ENCODE measurements at regions of chr2 and their contacts with region 1.

Region 1: GRCh38 chr2:27032495-27033252 is at the start of gene TMEM214:
- DNase-seq: peak; percentile 65 to 80 (median 73)
- H3K4me3 ChIP-seq: peak within 1 kb of the TSS; percentile 94 to 95
- H3K4me3 Mint-ChIP-seq: peak within 1 kb of the TSS; percentile 94 to 98 (median 96)
- H3K27ac ChIP-seq: peak within 1 kb of the TSS; percentile 77
- H3K27ac Mint-ChIP-seq: peak within 1 kb of the TSS; percentile 81 to 96 (median 95)
- H3K4me1 ChIP-seq: peaks cover 28% of the 10 kb centered on the region
- H3K4me1 Mint-ChIP-seq: peaks cover 19 to 49% (median 36%) of the 10 kb centered on the region in 4 donors
- H3K27me3 ChIP-seq: no peaks in the 10 kb centered on the region
- H3K27me3 Mint-ChIP-seq: no peaks in the 10 kb centered on the region
- total RNA-seq, gene TMEM214: 97.3 to 99.8 TPM

Region 2: DNA sequence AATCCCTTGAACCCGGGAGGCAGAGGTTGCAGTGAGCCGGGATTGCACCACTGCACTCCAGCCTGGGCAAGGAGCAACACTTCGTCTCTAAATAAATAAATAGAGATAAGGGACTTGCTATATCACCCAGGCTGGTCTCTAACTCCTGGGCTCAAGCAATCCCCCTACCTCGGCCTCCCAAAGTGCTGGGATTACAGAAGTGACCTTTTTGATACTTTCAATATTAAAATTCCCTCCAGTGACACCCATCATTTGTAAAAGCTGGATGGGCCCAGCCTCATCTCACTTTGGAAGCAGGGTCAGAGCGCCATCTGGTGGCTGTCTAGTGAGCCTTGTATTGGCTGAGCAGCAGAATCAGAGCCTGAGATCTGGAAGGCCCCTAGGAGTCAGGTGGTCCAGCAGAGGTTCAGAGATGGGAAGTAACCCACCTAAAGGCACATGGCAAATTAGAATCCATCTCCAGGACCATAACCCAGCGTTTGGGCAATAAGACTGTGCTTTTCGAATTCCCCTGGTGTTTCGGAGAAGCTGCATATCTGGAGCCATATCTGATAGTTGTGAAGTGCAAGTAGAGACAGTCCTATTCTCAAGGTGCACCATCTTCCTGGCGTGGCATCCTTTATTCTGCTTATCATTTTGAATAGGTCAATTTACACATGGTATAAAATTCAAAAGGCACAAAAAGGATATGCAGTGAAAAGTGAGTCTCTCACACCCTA is 286.9 kb before region 1 on chr2:
- CTCF ChIA-PET with region 1: no interaction called
- POLR2A ChIA-PET with region 1: no interaction called
- intact Hi-C with region 1: no loop called
- DNase-seq: peak; percentile 56 to 68 (median 59)
- H3K4me3 ChIP-seq: no peak overlapping the region
- H3K4me3 Mint-ChIP-seq: no peak overlapping the region
- H3K27ac ChIP-seq: no peak overlapping the region
- H3K27ac Mint-ChIP-seq: no peak overlapping the region
- H3K4me1 ChIP-seq: no peaks in the 10 kb centered on the region
- H3K4me1 Mint-ChIP-seq: peaks cover 0 to 2% (median under 1%) of the 10 kb centered on the region in 4 donors
- H3K27me3 ChIP-seq: no peaks in the 10 kb centered on the region
- H3K27me3 Mint-ChIP-seq: no peaks in the 10 kb centered on the region

Region 3: GRCh38 chr2:26970244-26970920 is 62.3 kb before region 1 on chr2 and contains the start of gene MAPRE3:
- CTCF ChIA-PET with region 1: no interaction called
- POLR2A ChIA-PET with region 1: no interaction called
- intact Hi-C with region 1: loop called (anchors 5 kb)
- DNase-seq: peak; percentile 81 to 93 (median 85)
- H3K4me3 ChIP-seq: peak within 1 kb of the TSS; percentile 66 to 76
- H3K4me3 Mint-ChIP-seq: peak within 1 kb of the TSS; percentile 82 to 90 (median 85)
- H3K27ac ChIP-seq: peak within 1 kb of the TSS; percentile 44
- H3K27ac Mint-ChIP-seq: peak within 1 kb of the TSS; percentile 75 to 96 (median 92)
- H3K4me1 ChIP-seq: peaks cover 15% of the 10 kb centered on the region
- H3K4me1 Mint-ChIP-seq: peaks cover 12 to 30% (median 18%) of the 10 kb centered on the region in 4 donors
- H3K27me3 ChIP-seq: no peaks in the 10 kb centered on the region
- H3K27me3 Mint-ChIP-seq: peaks cover 5 to 11% of the 10 kb centered on the region in 2 donors
- total RNA-seq, gene MAPRE3: 3.4 to 3.6 TPM

Region 4: DNA sequence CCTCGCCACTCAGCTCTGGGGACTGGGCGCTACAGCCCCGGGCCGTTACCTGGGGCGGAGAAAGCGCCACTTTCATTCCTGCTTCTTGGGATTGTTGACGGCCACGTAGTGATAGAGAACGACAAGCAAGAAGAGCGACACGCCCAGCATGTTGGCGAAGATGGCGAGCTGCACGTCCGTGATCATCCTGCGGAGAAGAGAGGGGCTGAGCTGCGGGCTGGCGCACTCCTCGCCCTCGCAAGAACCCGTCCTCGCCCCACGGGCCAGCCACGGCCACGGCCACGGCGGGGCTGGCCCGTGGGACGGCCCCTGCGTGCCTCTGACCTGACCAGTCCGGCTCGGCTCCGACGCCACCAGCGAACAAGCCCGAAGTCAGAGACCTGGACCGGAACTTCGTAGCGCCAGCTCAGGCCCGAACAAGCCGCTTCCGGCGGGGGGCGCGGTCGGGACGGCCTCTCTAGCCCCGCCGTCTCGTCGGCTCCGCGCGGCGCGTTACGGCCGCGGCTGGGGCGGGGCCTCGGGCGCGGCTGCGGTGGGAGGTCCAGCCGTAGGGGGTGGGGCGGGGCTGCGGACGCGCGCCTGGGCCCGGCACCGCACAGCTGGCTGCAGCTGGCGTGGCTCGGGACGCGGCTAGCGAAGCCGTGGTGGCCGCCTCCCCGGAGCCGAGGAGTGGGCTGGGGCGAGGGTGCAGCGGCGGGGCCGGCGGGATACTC is 38.8 kb after region 1 on chr2 and contains the start of gene OST4:
- CTCF ChIA-PET with region 1: interaction called, 5 read pairs
- POLR2A ChIA-PET with region 1: interaction called, 18 read pairs
- intact Hi-C with region 1: loop called (anchors 2 kb)
- DNase-seq: peak; percentile 87 to 91 (median 89)
- H3K4me3 ChIP-seq: peak within 1 kb of the TSS; percentile 95 to 97
- H3K4me3 Mint-ChIP-seq: peak within 1 kb of the TSS; percentile 92 to 98 (median 97)
- H3K27ac ChIP-seq: peak within 1 kb of the TSS; percentile 95
- H3K27ac Mint-ChIP-seq: peak within 1 kb of the TSS; percentile 93 to 99 (median 98)
- H3K4me1 ChIP-seq: peaks cover 62% of the 10 kb centered on the region
- H3K4me1 Mint-ChIP-seq: peaks cover 44 to 86% (median 70%) of the 10 kb centered on the region in 4 donors
- H3K27me3 ChIP-seq: no peaks in the 10 kb centered on the region
- H3K27me3 Mint-ChIP-seq: no peaks in the 10 kb centered on the region
- total RNA-seq, gene OST4: 269 to 296 TPM

Region 5: DNA sequence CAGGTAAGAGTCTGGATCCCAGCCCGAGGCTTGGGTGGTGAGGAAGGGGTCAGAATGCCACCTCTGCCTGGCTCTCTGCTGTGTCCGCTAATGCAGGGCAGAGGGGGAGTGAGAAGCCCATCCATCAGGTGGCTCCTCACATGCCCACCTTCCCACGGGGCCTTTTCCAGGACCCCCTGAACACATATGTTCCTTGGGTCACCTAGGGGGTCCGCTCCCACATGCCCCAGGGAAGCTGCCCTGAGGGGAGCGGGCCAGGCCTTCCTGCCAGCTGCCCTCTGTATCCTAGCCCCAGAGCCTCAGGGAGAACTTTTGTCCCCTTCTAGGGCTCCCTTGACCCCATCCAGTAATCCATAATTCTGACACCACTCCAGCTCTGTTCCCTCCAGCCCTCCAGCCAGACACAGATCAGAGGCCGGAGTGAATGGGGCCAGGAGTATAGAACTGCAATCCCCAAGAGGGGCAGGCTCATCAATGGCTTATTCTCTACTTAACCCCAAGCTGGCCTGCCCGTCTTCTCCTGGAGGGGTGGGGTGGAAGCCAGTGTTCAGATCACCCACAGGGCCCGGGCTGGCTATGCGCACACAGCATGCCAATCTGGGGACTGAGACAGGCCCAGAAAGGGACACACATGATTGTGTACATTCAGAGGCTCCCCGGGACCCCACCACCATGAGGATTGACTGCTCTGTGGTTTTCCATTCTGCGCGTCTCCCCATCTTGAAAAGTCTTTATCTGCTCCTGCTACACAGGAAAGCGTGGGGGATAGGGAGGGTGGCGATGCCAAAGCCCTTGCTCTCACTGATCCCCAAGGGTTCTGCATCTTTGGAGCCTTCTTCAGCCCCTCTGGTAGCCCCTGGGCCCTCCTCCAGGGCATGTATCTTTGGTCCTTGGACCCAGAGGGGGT is 46.8 kb after region 1 on chr2:
- CTCF ChIA-PET with region 1: no interaction called
- POLR2A ChIA-PET with region 1: interaction called, 10 read pairs
- intact Hi-C with region 1: loop called (anchors 1 kb)
- DNase-seq: no peak
- H3K4me3 ChIP-seq: no peak overlapping the region
- H3K4me3 Mint-ChIP-seq: no peak overlapping the region
- H3K27ac ChIP-seq: no peak overlapping the region
- H3K27ac Mint-ChIP-seq: peak overlapping the region in 1 of 7 donors; percentile 89
- H3K4me1 ChIP-seq: peaks cover 39% of the 10 kb centered on the region
- H3K4me1 Mint-ChIP-seq: peaks cover 23 to 43% (median 36%) of the 10 kb centered on the region in 4 donors
- H3K27me3 ChIP-seq: no peaks in the 10 kb centered on the region
- H3K27me3 Mint-ChIP-seq: peaks cover 0 to 2% of the 10 kb centered on the region in 2 donors